ENCODE measurements at regions of chr1 and their contacts with region 1.

Region 1: GRCh38 chr1:37682334-37682987 is 9.9 kb upstream of the CDCA8 start:
- DNase-seq: peak; percentile 67 to 86 (median 76)
- ATAC-seq: peak; percentile 98
- H3K4me3 ChIP-seq: no peak overlapping the region
- H3K4me3 Mint-ChIP-seq: no peak overlapping the region
- H3K27ac ChIP-seq: no peak overlapping the region
- H3K27ac Mint-ChIP-seq: peak overlapping the region; percentile 58
- H3K4me1 ChIP-seq: peaks cover 3% of the 10 kb centered on the region
- H3K4me1 Mint-ChIP-seq: peaks cover 9% of the 10 kb centered on the region
- H3K27me3 ChIP-seq: no peaks in the 10 kb centered on the region
- H3K27me3 Mint-ChIP-seq: no peaks in the 10 kb centered on the region
- CTCF ChIP-seq: peak; percentile 89

Region 2: GRCh38 chr1:37449936-37450335 is 232.5 kb before region 1 on chr1:
- CTCF ChIA-PET with region 1: interaction called, 3 read pairs
- POLR2A ChIA-PET with region 1: interaction called, 3 read pairs
- intact Hi-C with region 1: loop called (anchors 1 to 2 kb)
- DNase-seq: peak in 7 of 14 experiments; percentile 30 to 64 (median 40)
- ATAC-seq: peak; percentile 78
- H3K4me3 ChIP-seq: no peak overlapping the region
- H3K4me3 Mint-ChIP-seq: no peak overlapping the region
- H3K27ac ChIP-seq: no peak overlapping the region
- H3K27ac Mint-ChIP-seq: no peak overlapping the region
- H3K4me1 ChIP-seq: peaks cover 14% of the 10 kb centered on the region
- H3K4me1 Mint-ChIP-seq: peaks cover 18% of the 10 kb centered on the region
- H3K27me3 ChIP-seq: no peaks in the 10 kb centered on the region
- H3K27me3 Mint-ChIP-seq: no peaks in the 10 kb centered on the region
- CTCF ChIP-seq: no peak

Region 3: DNA sequence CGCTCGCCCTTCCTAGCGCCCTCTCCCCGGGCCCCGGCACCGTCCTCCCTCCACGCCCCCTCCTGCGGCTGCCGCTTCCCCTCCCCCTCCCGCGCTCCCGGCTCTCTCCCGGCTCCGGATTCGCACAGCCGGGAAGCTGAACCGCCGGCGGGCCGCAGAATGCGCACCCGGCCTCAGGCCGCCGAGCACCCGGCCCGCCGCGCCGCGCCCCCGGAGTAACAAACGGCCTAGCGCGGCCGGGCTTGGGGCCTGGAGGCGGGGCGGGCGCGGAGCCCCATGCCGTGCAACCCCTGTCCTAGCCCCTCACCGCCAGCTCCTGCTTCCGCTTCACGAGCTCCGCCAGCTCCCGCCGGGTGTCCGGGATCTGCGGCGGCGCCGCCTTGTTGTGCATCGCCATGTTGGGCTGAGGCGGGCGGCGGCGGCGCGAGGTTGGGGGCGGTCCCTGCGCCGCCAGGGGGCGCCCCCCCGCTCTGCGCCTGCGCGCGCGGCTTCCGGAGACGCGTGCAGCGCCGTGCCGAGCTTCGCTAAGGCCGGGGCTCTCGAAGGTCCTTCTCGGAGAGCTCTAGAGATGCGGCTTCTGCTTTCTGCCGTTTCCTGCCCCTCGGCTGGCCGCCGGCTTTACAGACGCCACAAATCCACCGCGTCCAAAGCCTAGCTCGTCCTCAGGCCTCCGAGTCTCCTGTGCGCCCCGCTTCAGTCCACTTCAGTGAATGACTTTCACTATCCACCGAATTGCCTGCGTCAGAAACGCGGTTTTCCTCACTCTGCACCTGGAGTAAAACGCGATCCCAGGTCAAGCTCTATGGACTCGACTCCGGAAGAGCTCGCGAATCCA is 167.9 kb before region 1 on chr1 and contains the start of gene MEAF6:
- CTCF ChIA-PET with region 1: interaction called, 7 read pairs
- POLR2A ChIA-PET with region 1: interaction called, 4 read pairs
- intact Hi-C with region 1: loop called (anchors 2 kb)
- DNase-seq: peak; percentile 72 to 93 (median 80)
- ATAC-seq: peak; percentile 95
- H3K4me3 ChIP-seq: peak within 1 kb of the TSS; percentile 86
- H3K4me3 Mint-ChIP-seq: peak within 1 kb of the TSS; percentile 97
- H3K27ac ChIP-seq: peak within 1 kb of the TSS; percentile 79 to 95
- H3K27ac Mint-ChIP-seq: peak within 1 kb of the TSS; percentile 95
- H3K4me1 ChIP-seq: peaks cover 22% of the 10 kb centered on the region
- H3K4me1 Mint-ChIP-seq: peaks cover 46% of the 10 kb centered on the region
- H3K27me3 ChIP-seq: no peaks in the 10 kb centered on the region
- H3K27me3 Mint-ChIP-seq: no peaks in the 10 kb centered on the region
- CTCF ChIP-seq: peak; percentile 75
- total RNA-seq, gene MEAF6: 39.0 to 41.5 TPM

Region 4: GRCh38 chr1:37561133-37562132 is 121.0 kb before region 1 on chr1:
- CTCF ChIA-PET with region 1: no interaction called
- POLR2A ChIA-PET with region 1: no interaction called
- intact Hi-C with region 1: loop called in 1 of 2 experiments (anchors 1 kb)
- DNase-seq: peak in 10 of 14 experiments; percentile 5 to 58 (median 24)
- ATAC-seq: peak; percentile 62
- H3K4me3 ChIP-seq: no peak overlapping the region
- H3K4me3 Mint-ChIP-seq: no peak overlapping the region
- H3K27ac ChIP-seq: no peak overlapping the region
- H3K27ac Mint-ChIP-seq: no peak overlapping the region
- H3K4me1 ChIP-seq: no peaks in the 10 kb centered on the region
- H3K4me1 Mint-ChIP-seq: no peaks in the 10 kb centered on the region
- H3K27me3 ChIP-seq: no peaks in the 10 kb centered on the region
- H3K27me3 Mint-ChIP-seq: peaks cover 4% of the 10 kb centered on the region
- CTCF ChIP-seq: peak; percentile 58

Region 5: DNA sequence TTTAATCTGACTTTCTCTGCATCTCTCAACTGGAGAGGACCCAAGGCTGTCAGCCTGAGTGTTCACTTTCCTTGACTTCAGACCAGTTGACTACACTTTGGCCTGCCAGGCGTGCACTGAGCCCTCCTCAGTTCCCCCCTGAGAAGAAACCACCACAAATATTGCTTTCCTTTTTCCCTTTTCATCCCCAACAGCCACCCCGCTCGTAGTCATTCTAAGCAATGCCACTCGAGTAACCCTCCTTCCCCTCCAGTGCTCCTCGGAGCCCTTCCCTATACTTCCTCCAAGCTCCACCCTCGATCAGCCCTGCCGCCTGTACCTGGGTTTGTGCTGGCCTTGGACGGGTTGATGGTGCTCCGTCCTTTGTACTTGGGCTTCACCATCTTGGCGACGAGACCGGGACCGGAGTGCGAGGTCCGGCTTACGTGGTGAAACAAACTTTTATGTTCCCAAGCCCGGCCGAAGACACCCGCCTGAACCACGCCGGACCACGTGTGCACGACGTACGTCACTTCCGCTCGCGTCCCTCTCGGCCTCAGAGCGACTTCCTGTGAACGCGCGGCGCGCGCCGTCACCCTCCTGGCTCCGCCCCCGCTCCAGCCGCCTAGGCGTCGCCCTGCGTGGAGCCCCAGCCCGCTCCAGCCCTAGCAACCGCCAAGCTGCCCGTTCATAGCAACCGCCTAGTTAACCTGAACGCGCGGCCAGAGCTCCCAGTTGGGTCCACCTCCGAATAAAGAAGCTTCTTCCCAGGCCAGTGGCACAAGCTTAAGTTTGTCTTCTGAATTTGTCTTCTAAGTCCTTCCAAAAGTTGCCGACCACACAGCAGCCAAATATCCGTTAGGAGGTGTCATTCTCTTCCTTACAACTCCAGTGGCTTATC is 86.8 kb before region 1 on chr1 and contains the start of gene GNL2:
- CTCF ChIA-PET with region 1: interaction called, 9 read pairs
- POLR2A ChIA-PET with region 1: no interaction called
- intact Hi-C with region 1: loop called in 1 of 2 experiments (anchors 2 kb)
- DNase-seq: peak; percentile 88 to 99 (median 96)
- ATAC-seq: peak; percentile 93
- H3K4me3 ChIP-seq: peak within 1 kb of the TSS; percentile 93
- H3K4me3 Mint-ChIP-seq: peak within 1 kb of the TSS; percentile 97
- H3K27ac ChIP-seq: peak within 1 kb of the TSS; percentile 75 to 90
- H3K27ac Mint-ChIP-seq: peak within 1 kb of the TSS; percentile 93
- H3K4me1 ChIP-seq: peaks cover 22% of the 10 kb centered on the region
- H3K4me1 Mint-ChIP-seq: peaks cover 34% of the 10 kb centered on the region
- H3K27me3 ChIP-seq: no peaks in the 10 kb centered on the region
- H3K27me3 Mint-ChIP-seq: no peaks in the 10 kb centered on the region
- CTCF ChIP-seq: no peak
- total RNA-seq, gene GNL2: 43.4 to 44.5 TPM

Region 6: DNA sequence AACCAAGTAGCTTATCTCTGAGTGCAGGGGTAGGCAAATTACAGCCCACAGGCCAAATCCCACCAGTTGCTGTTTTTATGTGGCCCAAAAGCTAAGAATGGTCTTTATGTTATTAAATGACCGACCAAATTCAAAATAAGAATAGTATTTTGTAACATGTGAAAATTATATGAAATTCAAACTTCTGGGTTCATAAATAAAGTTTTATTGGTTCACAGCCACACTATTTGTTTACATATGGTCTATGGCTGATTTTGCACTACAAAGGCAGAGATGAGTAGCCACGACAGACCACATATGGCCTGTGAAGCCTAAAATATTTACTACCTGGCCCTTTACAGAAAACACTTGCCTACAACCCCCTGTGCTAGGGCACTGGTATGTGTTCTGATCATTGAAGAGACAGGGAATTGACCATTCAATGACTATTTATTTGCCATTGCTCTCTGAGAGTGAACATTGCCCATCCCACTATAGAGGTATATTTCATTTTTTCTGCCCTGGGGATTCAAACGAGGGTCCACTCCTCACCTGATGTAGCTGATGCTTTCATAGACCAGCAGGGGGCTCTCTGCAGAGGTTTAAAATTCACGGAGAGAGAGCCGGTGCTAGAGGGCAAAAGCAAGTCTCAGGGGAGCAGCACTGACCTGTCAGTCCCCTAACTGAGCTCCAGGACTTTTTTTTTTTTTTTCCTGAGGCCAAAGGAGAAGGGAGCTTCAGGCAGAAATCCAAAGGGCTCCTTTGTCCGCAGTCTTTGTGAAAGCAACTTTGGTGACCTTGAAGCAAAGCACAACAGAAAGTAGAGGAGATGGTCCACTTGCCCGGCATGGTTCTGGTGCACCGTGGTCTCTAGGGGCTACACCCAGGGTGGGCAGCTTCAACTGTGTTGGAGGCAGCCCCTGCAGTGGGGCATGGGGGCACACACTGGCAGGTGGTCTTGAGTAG is 79.4 kb before region 1 on chr1:
- CTCF ChIA-PET with region 1: interaction called, 54 read pairs
- POLR2A ChIA-PET with region 1: interaction called, 6 read pairs
- intact Hi-C with region 1: loop called (anchors 1 kb)
- DNase-seq: peak in 12 of 14 experiments; percentile 6 to 71 (median 26)
- ATAC-seq: peak; percentile 74
- H3K4me3 ChIP-seq: no peak overlapping the region
- H3K4me3 Mint-ChIP-seq: no peak overlapping the region
- H3K27ac ChIP-seq: no peak overlapping the region
- H3K27ac Mint-ChIP-seq: no peak overlapping the region
- H3K4me1 ChIP-seq: peaks cover 7% of the 10 kb centered on the region
- H3K4me1 Mint-ChIP-seq: no peaks in the 10 kb centered on the region
- H3K27me3 ChIP-seq: no peaks in the 10 kb centered on the region
- H3K27me3 Mint-ChIP-seq: peaks cover 11% of the 10 kb centered on the region
- CTCF ChIP-seq: peak; percentile 87

Measured in CD4-positive, alpha-beta T cell (primary cell).